Naive thymus-derived CD4-positive, alpha-beta T cell (primary cell): ENCODE measurements at regions of chr13 and their contacts with region 1.

Region 1: GRCh38 chr13:48334534-48335127 is 31.1 kb downstream of the RB1 start:
- DNase-seq: peak in 6 of 9 donors; percentile 27 to 64 (median 48)
- ATAC-seq: peak; percentile 79
- H3K4me3 ChIP-seq: no peak overlapping the region
- H3K4me3 Mint-ChIP-seq: no peak overlapping the region
- H3K27ac ChIP-seq: no peak overlapping the region
- H3K27ac Mint-ChIP-seq: no peak overlapping the region
- H3K4me1 ChIP-seq: no peaks in the 10 kb centered on the region
- H3K4me1 Mint-ChIP-seq: peaks cover 0 to 23% (median 5%) of the 10 kb centered on the region in 7 donors
- H3K27me3 ChIP-seq: no peaks in the 10 kb centered on the region
- H3K27me3 Mint-ChIP-seq: no peaks in the 10 kb centered on the region

Region 2: DNA sequence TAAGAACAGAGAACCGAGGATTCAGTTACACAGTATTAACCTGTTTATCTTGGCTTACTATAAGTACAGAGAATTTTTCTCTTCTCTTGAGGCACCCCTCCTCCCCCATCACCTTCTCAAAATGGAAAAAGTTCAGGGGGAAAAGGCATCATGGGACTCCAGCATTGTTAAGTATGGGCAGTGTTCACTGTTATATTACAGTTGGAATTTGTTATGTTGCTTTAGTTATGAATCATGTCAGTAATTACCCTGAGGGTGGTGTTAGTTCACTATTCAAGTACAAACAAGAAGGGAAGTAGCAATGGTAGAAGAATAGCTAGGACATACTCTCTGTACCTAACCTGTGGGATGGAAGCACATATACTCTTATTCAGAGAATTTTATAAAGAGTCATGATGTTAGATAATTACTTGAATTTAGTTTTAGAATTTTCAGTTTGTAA is 66.2 kb after region 1 on chr13:
- CTCF ChIA-PET with region 1: interaction called, 3 read pairs
- POLR2A ChIA-PET with region 1: no interaction called
- intact Hi-C with region 1: loop called (anchors 1 to 5 kb)
- DNase-seq: peak in 2 of 9 donors; percentile 36 to 42
- ATAC-seq: peak; percentile 74
- H3K4me3 ChIP-seq: no peak overlapping the region
- H3K4me3 Mint-ChIP-seq: peak overlapping the region; percentile 1 to 83 (median 54)
- H3K27ac ChIP-seq: peak overlapping the region; percentile 49
- H3K27ac Mint-ChIP-seq: peak overlapping the region; percentile 1 to 90 (median 50)
- H3K4me1 ChIP-seq: peaks cover 33 to 40% of the 10 kb centered on the region in 2 donors
- H3K4me1 Mint-ChIP-seq: peaks cover 23 to 78% (median 63%) of the 10 kb centered on the region in 7 donors
- H3K27me3 ChIP-seq: no peaks in the 10 kb centered on the region
- H3K27me3 Mint-ChIP-seq: no peaks in the 10 kb centered on the region

Region 3: GRCh38 chr13:48477191-48477855 is 142.7 kb after region 1 on chr13:
- CTCF ChIA-PET with region 1: no interaction called
- POLR2A ChIA-PET with region 1: no interaction called
- intact Hi-C with region 1: no loop called
- DNase-seq: no peak
- ATAC-seq: no peak
- H3K4me3 ChIP-seq: no peak overlapping the region
- H3K4me3 Mint-ChIP-seq: no peak overlapping the region
- H3K27ac ChIP-seq: no peak overlapping the region
- H3K27ac Mint-ChIP-seq: no peak overlapping the region
- H3K4me1 ChIP-seq: no peaks in the 10 kb centered on the region
- H3K4me1 Mint-ChIP-seq: peaks cover 0 to 6% (median 3%) of the 10 kb centered on the region in 7 donors
- H3K27me3 ChIP-seq: no peaks in the 10 kb centered on the region
- H3K27me3 Mint-ChIP-seq: no peaks in the 10 kb centered on the region

Region 4: DNA sequence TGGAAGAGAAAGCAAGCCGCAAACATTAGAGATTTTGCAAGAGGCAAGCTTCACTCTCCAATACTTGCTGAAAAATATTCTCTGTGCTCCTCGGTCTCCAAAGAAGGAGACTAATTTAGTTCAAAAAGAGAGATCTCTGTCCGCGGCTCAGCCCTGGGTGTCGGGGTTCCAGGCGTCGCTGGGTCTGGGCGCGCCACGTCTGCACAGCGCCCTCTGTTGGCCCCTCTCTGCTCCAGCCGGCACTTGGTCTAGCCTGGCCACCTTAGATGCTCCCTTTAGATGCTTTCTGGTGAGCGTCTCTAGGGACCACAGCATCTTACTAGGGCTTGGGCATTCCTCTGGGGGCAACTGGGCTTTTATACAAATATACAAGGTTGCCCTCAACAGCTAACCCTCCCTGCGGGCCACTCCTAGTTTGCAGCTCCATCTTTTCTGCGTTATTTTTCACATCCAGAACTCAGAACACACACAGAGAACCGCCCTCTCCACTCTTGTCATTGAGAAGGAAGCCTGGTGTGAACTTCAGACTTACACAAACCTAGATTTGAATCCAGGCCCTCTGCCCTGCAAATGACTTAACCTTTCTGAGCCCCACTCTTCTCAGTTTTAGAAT is 397.4 kb after region 1 on chr13:
- CTCF ChIA-PET with region 1: interaction called, 3 read pairs
- POLR2A ChIA-PET with region 1: no interaction called
- intact Hi-C with region 1: loop called (anchors 1 to 10 kb)
- DNase-seq: peak; percentile 25 to 59 (median 51)
- ATAC-seq: peak; percentile 88
- H3K4me3 ChIP-seq: peak overlapping the region; percentile 31
- H3K4me3 Mint-ChIP-seq: peak overlapping the region; percentile 56 to 85 (median 78)
- H3K27ac ChIP-seq: no peak overlapping the region
- H3K27ac Mint-ChIP-seq: peak overlapping the region in 1 of 9 donors; percentile 57
- H3K4me1 ChIP-seq: no peaks in the 10 kb centered on the region
- H3K4me1 Mint-ChIP-seq: peaks cover 0 to 12% (median 6%) of the 10 kb centered on the region in 7 donors
- H3K27me3 ChIP-seq: peaks cover 0 to 4% of the 10 kb centered on the region in 2 donors
- H3K27me3 Mint-ChIP-seq: peaks cover 0 to 5% (median 4%) of the 10 kb centered on the region in 5 donors